PC-9 (cell line): ENCODE measurements at regions of chr3 and their contacts with region 1.

Region 1: DNA sequence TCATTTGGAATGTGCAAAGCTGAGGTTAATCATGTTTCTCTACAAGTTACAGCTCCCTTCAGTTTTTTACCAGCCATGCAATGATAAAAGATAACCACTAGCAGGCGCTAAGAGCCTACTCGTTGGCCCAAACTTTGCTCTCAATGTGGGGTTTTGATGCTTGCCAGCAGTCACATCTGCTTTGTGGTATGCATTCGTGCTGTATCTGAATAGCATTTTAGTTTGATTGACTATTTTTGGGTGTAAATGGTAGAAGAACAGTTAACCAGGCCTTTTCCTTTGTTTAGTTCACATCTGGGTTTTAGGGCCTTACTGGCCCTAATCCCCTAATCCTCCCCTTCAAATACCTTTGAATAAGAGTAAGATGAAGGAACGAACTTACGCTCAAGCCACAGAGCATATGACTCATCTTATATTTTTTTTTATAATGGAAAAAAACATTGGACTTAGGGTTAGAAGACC is 4.4 kb upstream of the CLDN11 start:
- DNase-seq: peak; percentile 62 to 68
- H3K4me3 ChIP-seq: no peak overlapping the region
- H3K27ac ChIP-seq: no peak overlapping the region
- H3K4me1 ChIP-seq: no peaks in the 10 kb centered on the region
- H3K27me3 ChIP-seq: no peaks in the 10 kb centered on the region
- CTCF ChIP-seq: peak; percentile 99

Region 2: DNA sequence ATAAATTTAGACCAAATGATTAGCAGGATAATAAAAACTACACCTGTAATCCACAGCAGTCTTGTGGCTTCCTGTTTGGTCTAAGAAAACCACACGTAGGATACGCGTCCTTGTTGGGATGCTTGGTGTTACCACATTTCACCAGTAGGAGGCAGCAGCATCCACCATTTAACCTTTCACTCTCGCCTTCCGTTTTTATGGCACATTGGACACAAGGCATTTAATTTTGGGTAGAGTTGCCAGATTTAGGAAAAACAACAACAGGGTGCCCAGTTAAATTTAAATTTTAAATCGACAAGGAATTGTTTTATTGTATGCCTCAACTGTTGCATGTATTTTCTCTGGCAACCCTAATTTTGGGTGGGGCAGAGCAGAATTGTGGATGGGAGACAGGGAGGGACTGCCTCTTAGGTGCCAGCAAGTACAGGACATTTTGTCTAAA is 550.8 kb before region 1 on chr3:
- CTCF ChIA-PET with region 1: no interaction called
- POLR2A ChIA-PET with region 1: no interaction called
- intact Hi-C with region 1: loop called (anchors 5 kb)
- DNase-seq: peak; percentile 71
- H3K4me3 ChIP-seq: no peak overlapping the region
- H3K27ac ChIP-seq: no peak overlapping the region
- H3K4me1 ChIP-seq: no peaks in the 10 kb centered on the region
- H3K27me3 ChIP-seq: no peaks in the 10 kb centered on the region
- CTCF ChIP-seq: peak; percentile 99

Region 3: DNA sequence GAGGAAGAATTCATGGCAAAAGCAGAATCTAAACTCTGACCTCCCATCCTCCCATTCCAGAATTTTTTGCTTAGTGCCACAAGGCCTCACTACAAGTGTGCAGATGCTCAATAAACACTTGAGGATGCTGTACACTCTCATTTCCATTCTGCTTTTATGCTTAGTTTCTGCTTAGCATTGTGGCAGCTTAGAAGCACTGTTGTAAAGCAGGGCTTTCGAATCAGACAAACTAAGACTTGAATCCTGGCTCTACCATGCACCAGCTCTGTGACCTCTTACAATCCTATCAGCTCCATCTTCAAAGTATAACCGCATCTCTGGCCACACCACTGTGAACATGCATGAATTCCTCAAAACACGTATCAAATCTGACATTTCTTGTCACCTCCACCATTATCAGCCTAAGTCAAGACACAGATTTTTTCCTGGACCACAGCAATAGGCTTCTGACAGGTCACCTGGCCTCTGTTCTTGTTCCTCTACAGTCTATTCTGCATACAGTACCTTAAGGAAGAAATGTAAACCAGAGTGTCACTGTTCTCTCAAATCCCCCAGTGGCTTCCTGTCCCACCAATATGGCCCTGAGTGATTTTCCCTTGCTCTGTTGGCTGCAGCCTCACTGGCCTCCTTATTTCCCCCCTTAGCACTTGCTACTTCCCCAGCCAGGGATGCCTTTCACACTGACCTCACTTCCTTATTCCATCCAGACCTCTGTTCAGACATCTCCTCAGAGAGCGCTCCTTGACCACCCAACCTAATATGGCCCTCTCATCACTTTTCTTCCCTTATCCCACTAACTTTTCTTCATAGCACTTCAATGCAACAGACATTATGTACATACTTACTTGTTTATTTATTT is 224.6 kb before region 1 on chr3:
- CTCF ChIA-PET with region 1: no interaction called
- POLR2A ChIA-PET with region 1: no interaction called
- intact Hi-C with region 1: loop called (anchors 1 kb)
- DNase-seq: no peak
- H3K4me3 ChIP-seq: no peak overlapping the region
- H3K27ac ChIP-seq: no peak overlapping the region
- H3K4me1 ChIP-seq: no peaks in the 10 kb centered on the region
- H3K27me3 ChIP-seq: no peaks in the 10 kb centered on the region
- CTCF ChIP-seq: peak; percentile 23; the same call in 1 of the 2 replicates

Region 4: DNA sequence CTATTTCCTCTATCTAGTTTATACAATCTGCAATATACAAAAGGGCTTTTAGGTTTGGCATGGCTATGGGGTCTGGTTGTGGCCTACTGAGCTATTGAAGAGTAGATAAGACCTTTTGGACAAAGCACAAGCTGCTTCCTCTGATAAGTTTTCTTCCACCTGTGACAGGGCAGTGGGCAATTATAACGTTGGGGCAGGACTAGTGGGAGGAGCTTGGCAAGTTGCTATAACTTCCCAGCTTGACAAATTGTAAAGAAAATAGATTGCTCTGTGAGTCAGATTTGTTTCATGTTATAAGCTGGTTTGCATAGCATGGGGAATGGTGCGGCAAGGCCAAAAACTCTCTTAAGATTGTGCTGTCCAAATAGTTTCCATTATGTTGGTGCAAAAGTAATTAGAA is 106.8 kb after region 1 on chr3:
- CTCF ChIA-PET with region 1: no interaction called
- POLR2A ChIA-PET with region 1: interaction called, 11 read pairs
- intact Hi-C with region 1: no loop called
- DNase-seq: no peak
- H3K4me3 ChIP-seq: no peak overlapping the region
- H3K27ac ChIP-seq: no peak overlapping the region
- H3K4me1 ChIP-seq: 0 out of 2 replicates have a peak, but pooled peaks cover 15% of the 10 kb centered on the region
- H3K27me3 ChIP-seq: no peaks in the 10 kb centered on the region
- CTCF ChIP-seq: no peak

Region 5: GRCh38 chr3:170603770-170604510 is 189.7 kb after region 1 on chr3:
- CTCF ChIA-PET with region 1: interaction called, 3 read pairs
- POLR2A ChIA-PET with region 1: no interaction called
- intact Hi-C with region 1: loop called (anchors 10 kb)
- DNase-seq: no peak
- H3K4me3 ChIP-seq: no peak overlapping the region
- H3K27ac ChIP-seq: no peak overlapping the region
- H3K4me1 ChIP-seq: no peaks in the 10 kb centered on the region
- H3K27me3 ChIP-seq: no peaks in the 10 kb centered on the region
- CTCF ChIP-seq: no peak

Region 6: GRCh38 chr3:170740726-170741591 is 326.7 kb after region 1 on chr3:
- CTCF ChIA-PET with region 1: interaction called, 6 read pairs
- POLR2A ChIA-PET with region 1: no interaction called
- intact Hi-C with region 1: loop called (anchors 1 kb)
- DNase-seq: peak; percentile 59 to 88
- H3K4me3 ChIP-seq: peak overlapping the region; percentile 6; the same call in 1 of the 2 replicates
- H3K27ac ChIP-seq: peak overlapping the region; percentile 81
- H3K4me1 ChIP-seq: peaks cover 72% of the 10 kb centered on the region
- H3K27me3 ChIP-seq: no peaks in the 10 kb centered on the region
- CTCF ChIP-seq: no peak